Activated naive CD4-positive, alpha-beta T cell treated with anti-CD3 and anti-CD28 coated beads, Interleukin-2, amount 10 ng/mL, durations not matched to agents 7 days and 5 days (primary cell): ENCODE measurements at regions of chr7 and their contacts with region 1.

Region 1: DNA sequence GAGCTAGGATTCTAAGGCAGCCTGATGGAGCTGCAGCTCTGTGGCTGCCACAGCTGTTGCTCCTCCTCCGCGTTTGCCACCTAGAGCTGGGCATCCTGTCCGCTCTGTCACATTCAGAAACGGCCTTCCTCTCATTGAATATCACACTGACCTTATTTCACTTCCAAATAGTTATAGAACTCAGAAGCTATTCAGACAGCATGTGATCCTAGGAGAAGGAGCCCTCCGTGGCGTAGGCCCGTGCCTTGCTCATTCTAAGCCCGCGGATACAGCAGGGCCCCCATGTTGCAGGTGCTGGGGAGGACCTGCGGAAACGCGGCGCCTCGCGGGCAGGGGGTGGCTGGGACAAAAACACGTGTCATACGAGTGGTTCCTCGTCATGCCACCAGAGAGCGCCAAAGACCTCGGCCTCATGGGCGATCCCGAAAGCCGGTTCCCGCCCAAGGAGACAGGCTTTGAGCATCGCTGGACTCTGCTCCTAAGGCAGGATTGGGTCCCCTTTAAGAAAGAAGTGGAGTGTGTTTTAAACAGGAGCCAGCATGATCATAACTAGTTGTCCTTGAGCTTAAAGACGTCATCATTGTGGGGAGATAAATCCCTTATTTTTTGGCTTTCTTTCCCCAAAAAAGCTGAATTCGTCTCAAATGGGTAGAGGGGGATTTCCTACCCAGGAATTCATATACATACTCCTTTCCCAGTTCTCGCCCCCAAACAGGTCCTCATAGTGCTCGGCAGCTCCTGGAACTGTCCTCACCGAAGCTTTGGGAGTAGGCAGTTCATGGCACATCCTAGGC is 17.9 kb upstream of the FIGNL1 start:
- DNase-seq: peak; percentile 89
- H3K4me3 Mint-ChIP-seq: peak overlapping the region; percentile 2
- H3K27ac Mint-ChIP-seq: no peak overlapping the region
- H3K4me1 Mint-ChIP-seq: peaks cover 12% of the 10 kb centered on the region
- H3K27me3 Mint-ChIP-seq: peaks cover 20% of the 10 kb centered on the region

Region 2: DNA sequence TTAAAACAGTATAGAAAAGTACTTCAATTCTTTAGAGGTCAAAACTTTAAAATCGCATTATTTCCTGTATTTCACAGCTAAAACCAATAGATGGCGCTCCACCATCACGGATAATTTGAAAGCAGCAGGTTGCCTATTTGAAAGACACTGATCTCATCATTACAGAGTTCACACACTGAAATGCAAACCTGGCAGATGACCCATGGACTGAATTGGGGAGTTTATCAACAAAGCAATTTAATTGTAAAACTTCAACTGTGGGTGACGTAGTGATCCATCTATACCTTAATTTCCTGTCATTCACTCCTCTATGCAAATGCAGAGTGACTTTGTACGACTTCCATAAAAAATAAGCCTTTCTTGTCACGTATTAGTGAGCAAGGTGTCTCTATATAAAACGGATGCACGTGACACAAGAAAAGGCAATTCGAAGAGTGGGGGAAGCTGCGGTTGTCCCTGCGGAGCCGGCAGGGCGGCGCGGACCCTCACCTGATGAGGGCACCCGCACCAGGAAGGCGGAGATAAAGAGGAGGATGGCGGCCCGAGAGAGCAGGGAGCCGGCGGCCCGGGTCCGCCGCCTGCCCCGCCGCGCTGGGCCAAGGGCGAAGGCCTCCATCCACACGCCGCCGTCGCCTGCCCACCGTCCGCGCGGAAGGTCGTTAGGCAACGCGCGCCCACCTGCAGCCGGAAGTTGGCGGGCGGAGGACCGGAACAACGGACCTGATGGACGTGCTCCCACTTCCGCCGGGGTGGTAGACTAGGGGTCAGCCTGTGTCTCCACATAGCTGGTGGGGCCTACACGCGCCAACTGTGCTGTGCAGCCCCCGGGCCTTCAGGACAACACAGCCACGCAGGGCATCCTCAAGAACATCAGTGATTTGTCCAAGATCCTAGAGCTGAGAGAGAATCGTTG is 375.2 kb before region 1 on chr7 and contains the start of gene ZPBP:
- CTCF ChIA-PET with region 1: interaction called, 27 read pairs
- DNase-seq: peak; percentile 58
- H3K4me3 Mint-ChIP-seq: peak within 1 kb of the TSS; percentile 75
- H3K27ac Mint-ChIP-seq: peak within 1 kb of the TSS; percentile 75
- H3K4me1 Mint-ChIP-seq: peaks cover 5% of the 10 kb centered on the region
- H3K27me3 Mint-ChIP-seq: peaks cover 3% of the 10 kb centered on the region

Region 3: GRCh38 chr7:50261593-50261992 is 206.4 kb before region 1 on chr7:
- CTCF ChIA-PET with region 1: no interaction called
- DNase-seq: peak; percentile 40
- H3K4me3 Mint-ChIP-seq: no peak overlapping the region
- H3K27ac Mint-ChIP-seq: peak overlapping the region; percentile 99
- H3K4me1 Mint-ChIP-seq: peaks cover 77% of the 10 kb centered on the region
- H3K27me3 Mint-ChIP-seq: no peaks in the 10 kb centered on the region

Region 4: GRCh38 chr7:50397320-50397970 is 70.6 kb before region 1 on chr7:
- CTCF ChIA-PET with region 1: no interaction called
- DNase-seq: peak; percentile 48
- H3K4me3 Mint-ChIP-seq: peak overlapping the region; percentile 25
- H3K27ac Mint-ChIP-seq: peak overlapping the region; percentile 78
- H3K4me1 Mint-ChIP-seq: peaks cover 78% of the 10 kb centered on the region
- H3K27me3 Mint-ChIP-seq: no peaks in the 10 kb centered on the region

Region 5: DNA sequence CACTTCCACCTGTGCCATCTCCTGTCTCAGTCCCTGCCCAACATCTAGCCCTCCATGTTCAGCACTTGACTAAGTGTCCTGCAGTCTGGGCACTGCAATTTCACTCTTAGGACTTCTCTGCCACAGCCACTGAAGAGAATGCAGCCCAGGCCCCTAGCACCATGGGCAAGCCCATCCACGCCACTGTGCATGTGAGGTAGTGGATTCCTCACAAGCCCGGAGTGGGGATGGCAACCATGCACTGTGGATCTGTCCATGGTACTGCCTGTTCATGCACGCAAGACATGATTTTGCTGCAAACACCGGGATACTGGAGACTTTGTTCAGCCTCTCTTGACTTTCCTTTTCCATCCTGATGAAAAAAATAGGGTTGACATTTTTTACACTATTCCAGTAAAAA is 84.9 kb after region 1 on chr7:
- CTCF ChIA-PET with region 1: no interaction called
- DNase-seq: peak; percentile 36
- H3K4me3 Mint-ChIP-seq: no peak overlapping the region
- H3K27ac Mint-ChIP-seq: no peak overlapping the region
- H3K4me1 Mint-ChIP-seq: no peaks in the 10 kb centered on the region
- H3K27me3 Mint-ChIP-seq: peaks cover 16% of the 10 kb centered on the region

Region 6: DNA sequence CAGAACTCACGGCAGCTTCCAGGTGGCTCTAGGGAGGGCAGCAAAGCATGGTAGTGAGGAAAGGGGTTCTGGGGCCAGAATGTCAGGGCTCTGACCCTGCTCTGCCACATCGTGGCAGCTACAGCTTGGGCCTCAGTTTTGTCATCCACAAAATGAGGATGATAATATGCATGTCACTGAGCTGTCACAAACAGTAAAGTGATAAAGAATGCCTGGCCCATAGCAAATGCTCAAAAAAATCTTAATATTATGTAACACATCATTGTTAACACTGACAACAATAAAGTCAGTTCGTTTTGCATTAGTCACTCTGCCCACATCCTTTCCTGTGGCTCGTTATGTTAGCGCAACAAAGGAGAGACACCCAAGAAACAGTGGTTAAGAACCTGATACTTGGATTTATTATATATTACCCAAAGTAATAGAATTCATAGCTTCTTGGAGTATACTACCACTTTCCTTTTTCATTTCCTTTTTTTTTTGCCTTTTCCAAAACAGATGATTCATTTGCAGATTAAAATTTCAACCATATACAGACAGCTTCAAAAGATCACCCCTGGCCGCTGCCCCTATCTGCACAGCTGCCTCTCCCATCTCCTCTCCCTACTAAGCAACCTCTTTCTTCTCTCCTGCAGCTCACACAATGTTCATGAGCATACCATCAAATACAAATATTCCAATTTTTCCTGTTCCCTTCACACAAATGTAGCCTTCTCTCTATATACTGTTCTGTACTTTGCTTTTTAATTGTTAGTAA is 142.7 kb after region 1 on chr7:
- CTCF ChIA-PET with region 1: interaction called, 20 read pairs
- DNase-seq: peak; percentile 74
- H3K4me3 Mint-ChIP-seq: no peak overlapping the region
- H3K27ac Mint-ChIP-seq: peak overlapping the region; percentile 74
- H3K4me1 Mint-ChIP-seq: peaks cover 48% of the 10 kb centered on the region
- H3K27me3 Mint-ChIP-seq: peaks cover 11% of the 10 kb centered on the region

Region 7: DNA sequence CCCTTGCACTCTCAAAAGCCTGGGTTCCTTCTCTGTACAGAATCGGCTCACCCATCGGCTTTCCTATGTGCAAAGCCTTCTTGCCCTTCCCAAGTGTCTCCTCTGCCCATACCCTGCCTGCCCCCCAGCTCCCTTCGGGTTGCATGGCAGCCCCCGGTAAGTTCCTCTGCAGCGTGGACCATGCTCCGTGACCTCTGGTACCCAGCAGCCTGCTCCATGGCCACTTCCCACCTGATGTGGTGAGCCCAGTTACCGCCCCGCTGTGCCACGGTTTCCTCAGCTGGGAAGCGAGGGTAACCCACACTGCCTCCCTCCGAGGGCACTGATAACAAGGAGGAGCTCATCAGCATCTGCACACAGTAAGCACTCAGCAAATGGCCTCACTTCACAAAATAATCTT is 204.0 kb after region 1 on chr7:
- CTCF ChIA-PET with region 1: interaction called, 76 read pairs
- DNase-seq: no peak
- H3K4me3 Mint-ChIP-seq: no peak overlapping the region
- H3K27ac Mint-ChIP-seq: no peak overlapping the region
- H3K4me1 Mint-ChIP-seq: peaks cover 11% of the 10 kb centered on the region
- H3K27me3 Mint-ChIP-seq: peaks cover 18% of the 10 kb centered on the region

Region 8: DNA sequence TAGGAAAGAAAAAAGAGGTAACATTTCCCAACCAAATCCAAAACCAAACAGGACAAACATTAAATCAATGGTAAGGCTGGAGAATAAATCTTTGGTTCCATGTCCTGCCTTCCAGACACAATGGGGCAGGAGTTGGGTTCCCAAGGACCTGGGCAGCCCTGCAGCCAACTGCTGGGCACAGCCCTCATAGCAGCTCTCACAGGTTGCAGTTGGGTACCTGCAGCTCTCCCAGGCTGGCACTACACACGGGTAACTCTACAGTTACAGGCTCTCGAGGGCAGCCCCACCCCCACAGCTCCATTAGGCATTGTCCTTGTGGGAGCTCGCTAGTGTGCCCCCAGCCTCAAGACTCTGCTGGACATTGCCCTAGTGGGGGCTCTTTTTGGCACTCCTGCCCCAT is 307.2 kb after region 1 on chr7:
- CTCF ChIA-PET with region 1: no interaction called
- DNase-seq: no peak
- H3K4me3 Mint-ChIP-seq: no peak overlapping the region
- H3K27ac Mint-ChIP-seq: no peak overlapping the region
- H3K4me1 Mint-ChIP-seq: no peaks in the 10 kb centered on the region
- H3K27me3 Mint-ChIP-seq: peaks cover 6% of the 10 kb centered on the region

Region 9: GRCh38 chr7:51141451-51142003 is 673.5 kb after region 1 on chr7:
- CTCF ChIA-PET with region 1: interaction called, 19 read pairs
- DNase-seq: peak; percentile 30
- H3K4me3 Mint-ChIP-seq: no peak overlapping the region
- H3K27ac Mint-ChIP-seq: no peak overlapping the region
- H3K4me1 Mint-ChIP-seq: peaks cover 16% of the 10 kb centered on the region
- H3K27me3 Mint-ChIP-seq: peaks cover 14% of the 10 kb centered on the region